ENCODE measurements at regions of chr10 and their contacts with region 1.

Region 1: DNA sequence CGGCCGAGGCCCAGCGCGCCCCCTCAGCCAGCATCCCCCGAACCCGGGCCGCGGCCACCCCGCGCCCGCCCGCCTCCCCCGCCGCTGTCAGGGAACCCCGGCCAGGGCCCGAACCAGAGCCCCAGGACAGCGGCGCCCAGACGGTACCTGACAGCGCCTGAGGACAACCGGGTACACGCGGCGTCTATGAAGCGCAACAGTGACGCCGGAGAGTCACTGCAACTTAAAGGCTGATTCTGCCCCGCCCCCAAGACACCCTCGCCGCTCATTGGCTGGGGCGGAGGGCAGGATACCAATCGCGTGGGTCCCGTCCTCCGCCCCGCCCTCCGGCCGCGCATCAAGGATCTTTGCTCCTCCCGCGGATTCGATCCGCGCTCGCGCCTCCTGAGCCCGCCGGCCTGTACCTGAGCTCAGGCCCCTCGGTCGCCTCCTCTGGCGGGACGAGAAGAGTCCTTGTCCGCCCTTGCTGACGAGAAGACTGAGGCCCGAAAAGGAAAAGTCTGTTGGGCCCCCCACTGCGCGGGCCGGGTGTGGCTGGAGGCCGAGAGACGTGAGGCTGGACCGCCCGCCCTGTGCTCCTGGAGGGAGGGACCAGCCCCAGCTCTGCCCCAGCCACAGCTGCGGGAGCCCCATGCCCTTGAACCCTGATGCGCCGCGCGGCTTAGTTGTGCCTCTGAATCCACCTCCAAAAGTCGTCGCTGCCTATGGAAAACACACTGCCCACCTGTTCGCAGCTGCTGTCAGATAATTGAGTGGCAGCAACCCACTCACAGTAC is at the start of gene OAT:
- DNase-seq: peak; percentile 97
- H3K4me3 Mint-ChIP-seq: peak within 1 kb of the TSS; percentile 78
- H3K27ac Mint-ChIP-seq: peak within 1 kb of the TSS; percentile 81
- H3K4me1 Mint-ChIP-seq: peaks cover 31% of the 10 kb centered on the region
- H3K27me3 Mint-ChIP-seq: no peaks in the 10 kb centered on the region
- CTCF ChIP-seq: no peak
- total RNA-seq, gene OAT: 62.2 and 68.1 TPM in 2 replicates

Region 2: GRCh38 chr10:124403548-124403947 is 15.4 kb before region 1 on chr10:
- CTCF ChIA-PET with region 1: interaction called, 22 read pairs
- POLR2A ChIA-PET with region 1: interaction called, 9 read pairs
- intact Hi-C with region 1: no loop called
- DNase-seq: peak; percentile 81
- H3K4me3 Mint-ChIP-seq: no peak overlapping the region
- H3K27ac Mint-ChIP-seq: no peak overlapping the region
- H3K4me1 Mint-ChIP-seq: no peaks in the 10 kb centered on the region
- H3K27me3 Mint-ChIP-seq: no peaks in the 10 kb centered on the region
- CTCF ChIP-seq: peak; percentile 46

Region 3: GRCh38 chr10:124461438-124462347 is 42.8 kb after region 1 on chr10 and contains the start of gene LHPP:
- CTCF ChIA-PET with region 1: no interaction called
- POLR2A ChIA-PET with region 1: interaction called, 16 read pairs
- intact Hi-C with region 1: no loop called
- DNase-seq: peak; percentile 81
- H3K4me3 Mint-ChIP-seq: peak within 1 kb of the TSS; percentile 68
- H3K27ac Mint-ChIP-seq: peak within 1 kb of the TSS; percentile 86
- H3K4me1 Mint-ChIP-seq: peaks cover 13% of the 10 kb centered on the region
- H3K27me3 Mint-ChIP-seq: no peaks in the 10 kb centered on the region
- CTCF ChIP-seq: peak; percentile 44
- total RNA-seq, gene LHPP: 3.5 and 3.7 TPM in 2 replicates